IMR-90 (cell line): ENCODE measurements at regions of chr3 and their contacts with region 1.

Region 1: GRCh38 chr3:88075072-88075471 is 16.0 kb downstream of the ZNF654 start:
- DNase-seq: no peak
- ATAC-seq: no peak
- H3K4me3 ChIP-seq: no peak overlapping the region
- H3K27ac ChIP-seq: no peak overlapping the region
- H3K4me1 ChIP-seq: peaks cover 3% of the 10 kb centered on the region; the same call in 1 of the 2 replicates
- H3K27me3 ChIP-seq: no peaks in the 10 kb centered on the region
- CTCF ChIP-seq: no peak
- POLR2A ChIP-seq: no peak
- RAD21 ChIP-seq: no peak

Region 2: GRCh38 chr3:88113311-88114162 is 38.5 kb after region 1 on chr3:
- CTCF ChIA-PET with region 1: no interaction called
- POLR2A ChIA-PET with region 1: no interaction called
- dilution Hi-C with region 1: no loop called
- in situ Hi-C with region 1: no loop called
- intact Hi-C with region 1: loop called (anchors 5 kb)
- DNase-seq: peak; percentile 70
- ATAC-seq: peak; percentile 96
- H3K4me3 ChIP-seq: no peak overlapping the region
- H3K27ac ChIP-seq: no peak overlapping the region
- H3K4me1 ChIP-seq: no peaks in the 10 kb centered on the region
- H3K27me3 ChIP-seq: no peaks in the 10 kb centered on the region
- CTCF ChIP-seq: peak; percentile 74
- POLR2A ChIP-seq: no peak
- RAD21 ChIP-seq: peak; percentile 69